GM12878 (cell line): ENCODE measurements at regions of chr16 and their contacts with region 1.

Region 1: DNA sequence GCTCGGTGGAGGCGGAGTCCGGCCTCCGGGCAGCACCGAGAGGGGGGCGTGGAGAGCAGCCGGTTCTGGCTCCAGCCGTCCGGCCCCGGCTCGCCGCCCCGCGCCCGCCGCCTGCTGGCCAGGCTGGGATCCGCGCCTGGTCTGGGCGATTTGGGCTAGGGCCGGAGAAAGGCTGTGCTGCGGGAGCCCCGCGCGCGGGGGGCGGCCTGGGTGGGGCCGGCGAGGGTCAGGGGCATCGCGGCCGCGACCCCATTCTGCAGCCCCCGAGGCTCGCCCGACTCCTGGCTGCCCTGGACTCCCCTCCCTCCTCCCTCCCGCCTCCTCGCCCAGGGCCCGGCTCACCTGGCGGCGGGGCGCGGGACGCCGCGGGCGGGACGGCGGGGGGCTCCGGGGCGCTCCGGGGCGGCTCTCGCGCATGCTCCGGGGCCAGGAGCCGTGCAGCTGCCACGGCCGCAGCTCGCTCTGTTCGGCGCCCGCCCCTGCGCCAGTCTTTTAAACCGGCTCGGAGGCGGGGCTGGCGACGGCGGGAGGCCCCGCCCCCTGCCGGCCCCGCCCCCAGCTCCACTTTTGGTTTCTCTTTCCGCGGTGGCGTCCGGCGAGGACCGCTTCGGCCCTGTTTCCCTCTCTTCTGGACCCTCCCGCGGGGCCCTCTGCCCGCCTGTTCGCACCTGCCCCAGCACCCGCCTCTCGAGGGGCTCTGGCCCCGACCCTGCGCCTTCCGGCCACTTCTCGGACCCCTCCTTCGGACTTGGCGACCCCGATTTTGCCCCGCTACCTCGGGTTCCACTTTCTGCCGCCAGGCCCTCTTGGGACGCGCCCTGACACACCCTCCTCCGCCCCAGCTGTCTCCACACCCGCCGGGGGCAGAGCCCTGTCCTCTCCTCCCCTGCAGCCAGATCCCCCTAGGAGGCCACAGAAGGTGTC is at the start of gene SOCS1:
- DNase-seq: no peak
- ATAC-seq: peak; percentile 60
- H3K4me3 ChIP-seq: peak within 1 kb of the TSS; percentile 91
- H3K27ac ChIP-seq: peak within 1 kb of the TSS; percentile 91
- H3K4me1 ChIP-seq: peaks cover 43% of the 10 kb centered on the region
- H3K27me3 ChIP-seq: no peaks in the 10 kb centered on the region
- CTCF ChIP-seq: peak; percentile 72 to 79 (median 76); a peak in 5 of 6 replicates
- EP300 ChIP-seq: 0 out of 4 replicates have a peak, but pooled peaks of 1 of the 2 experiments have one; percentile 7
- POLR2A ChIP-seq: peak; percentile 92
- RAD21 ChIP-seq: peak; percentile 68
- polyA plus RNA-seq, gene SOCS1: 0.42 to 1.2 TPM

Region 2: GRCh38 chr16:10949370-10949970 is 306.5 kb before region 1 on chr16:
- CTCF ChIA-PET with region 1: interaction called, 18 read pairs
- POLR2A ChIA-PET with region 1: interaction called, 4 read pairs
- RAD21 ChIA-PET with region 1: interaction called, 23 read pairs
- SMC1A ChIA-PET with region 1: interaction called, 4 read pairs
- in situ Hi-C with region 1: no loop called
- intact Hi-C with region 1: no loop called
- DNase-seq: peak; percentile 91
- ATAC-seq: peak; percentile 83
- H3K4me3 ChIP-seq: peak overlapping the region; percentile 28; the same call in 1 of the 2 replicates
- H3K27ac ChIP-seq: peak overlapping the region; percentile 62
- H3K4me1 ChIP-seq: peaks cover 27% of the 10 kb centered on the region
- H3K27me3 ChIP-seq: no peaks in the 10 kb centered on the region
- CTCF ChIP-seq: peak; percentile 34 to 55 (median 49); a peak in 2 of 6 replicates
- EP300 ChIP-seq: peak; percentile 9 to 33; a peak in 1 of 4 replicates
- POLR2A ChIP-seq: no peak
- RAD21 ChIP-seq: no peak

Region 3: GRCh38 chr16:11076259-11077018 is 179.6 kb before region 1 on chr16:
- CTCF ChIA-PET with region 1: interaction called, 14 read pairs
- POLR2A ChIA-PET with region 1: interaction called, 5 read pairs
- RAD21 ChIA-PET with region 1: interaction called, 19 read pairs
- SMC1A ChIA-PET with region 1: interaction called, 8 read pairs
- in situ Hi-C with region 1: no loop called
- intact Hi-C with region 1: loop called (anchors 5 kb)
- DNase-seq: peak; percentile 79
- ATAC-seq: peak; percentile 64
- H3K4me3 ChIP-seq: no peak overlapping the region
- H3K27ac ChIP-seq: peak overlapping the region; percentile 65
- H3K4me1 ChIP-seq: peaks cover 46% of the 10 kb centered on the region
- H3K27me3 ChIP-seq: no peaks in the 10 kb centered on the region
- CTCF ChIP-seq: no peak
- EP300 ChIP-seq: 0 out of 4 replicates have a peak, but pooled peaks of 1 of the 2 experiments have one; percentile 10
- POLR2A ChIP-seq: no peak
- RAD21 ChIP-seq: no peak

Region 4: GRCh38 chr16:11181899-11182279 is 74.1 kb before region 1 on chr16:
- CTCF ChIA-PET with region 1: interaction called, 15 read pairs
- POLR2A ChIA-PET with region 1: interaction called, 11 read pairs
- RAD21 ChIA-PET with region 1: interaction called, 39 read pairs
- SMC1A ChIA-PET with region 1: interaction called, 8 read pairs
- in situ Hi-C with region 1: no loop called
- intact Hi-C with region 1: loop called (anchors 1 kb)
- DNase-seq: peak; percentile 64
- ATAC-seq: peak; percentile 37
- H3K4me3 ChIP-seq: no peak overlapping the region
- H3K27ac ChIP-seq: peak overlapping the region; percentile 81
- H3K4me1 ChIP-seq: peaks cover 47% of the 10 kb centered on the region
- H3K27me3 ChIP-seq: no peaks in the 10 kb centered on the region
- CTCF ChIP-seq: no peak
- EP300 ChIP-seq: peak in 1 of 2 experiments; percentile 70; a peak in 1 of 4 replicates
- POLR2A ChIP-seq: peak; percentile 15; the same call in 1 of the 2 replicates
- RAD21 ChIP-seq: no peak

Region 5: GRCh38 chr16:11232852-11233726 is 22.9 kb before region 1 on chr16:
- CTCF ChIA-PET with region 1: interaction called, 7 read pairs
- POLR2A ChIA-PET with region 1: interaction called, 12 read pairs
- RAD21 ChIA-PET with region 1: interaction called, 13 read pairs
- SMC1A ChIA-PET with region 1: interaction called, 8 read pairs
- in situ Hi-C with region 1: no loop called
- intact Hi-C with region 1: no loop called
- DNase-seq: no peak
- ATAC-seq: peak; percentile 86
- H3K4me3 ChIP-seq: no peak overlapping the region
- H3K27ac ChIP-seq: peak overlapping the region; percentile 74
- H3K4me1 ChIP-seq: peaks cover 26% of the 10 kb centered on the region
- H3K27me3 ChIP-seq: no peaks in the 10 kb centered on the region
- CTCF ChIP-seq: no peak; a peak in 1 of 6 replicates
- EP300 ChIP-seq: peak in 1 of 2 experiments; percentile 52; a peak in 1 of 4 replicates
- POLR2A ChIP-seq: peak; percentile 79; the same call in 1 of the 2 replicates
- RAD21 ChIP-seq: peak; percentile 27

Region 6: GRCh38 chr16:11312718-11313492 is 56.9 kb after region 1 on chr16:
- CTCF ChIA-PET with region 1: interaction called, 33 read pairs
- POLR2A ChIA-PET with region 1: interaction called, 16 read pairs
- RAD21 ChIA-PET with region 1: interaction called, 104 read pairs
- SMC1A ChIA-PET with region 1: interaction called, 72 read pairs
- in situ Hi-C with region 1: no loop called
- intact Hi-C with region 1: loop called (anchors 2 kb)
- DNase-seq: no peak
- ATAC-seq: no peak
- H3K4me3 ChIP-seq: no peak overlapping the region
- H3K27ac ChIP-seq: no peak overlapping the region; the same call in 1 of the 2 replicates
- H3K4me1 ChIP-seq: peaks cover 57% of the 10 kb centered on the region
- H3K27me3 ChIP-seq: no peaks in the 10 kb centered on the region; a peak in 1 of 4 replicates
- CTCF ChIP-seq: no peak
- EP300 ChIP-seq: no peak
- POLR2A ChIP-seq: no peak
- RAD21 ChIP-seq: no peak

Region 7: DNA sequence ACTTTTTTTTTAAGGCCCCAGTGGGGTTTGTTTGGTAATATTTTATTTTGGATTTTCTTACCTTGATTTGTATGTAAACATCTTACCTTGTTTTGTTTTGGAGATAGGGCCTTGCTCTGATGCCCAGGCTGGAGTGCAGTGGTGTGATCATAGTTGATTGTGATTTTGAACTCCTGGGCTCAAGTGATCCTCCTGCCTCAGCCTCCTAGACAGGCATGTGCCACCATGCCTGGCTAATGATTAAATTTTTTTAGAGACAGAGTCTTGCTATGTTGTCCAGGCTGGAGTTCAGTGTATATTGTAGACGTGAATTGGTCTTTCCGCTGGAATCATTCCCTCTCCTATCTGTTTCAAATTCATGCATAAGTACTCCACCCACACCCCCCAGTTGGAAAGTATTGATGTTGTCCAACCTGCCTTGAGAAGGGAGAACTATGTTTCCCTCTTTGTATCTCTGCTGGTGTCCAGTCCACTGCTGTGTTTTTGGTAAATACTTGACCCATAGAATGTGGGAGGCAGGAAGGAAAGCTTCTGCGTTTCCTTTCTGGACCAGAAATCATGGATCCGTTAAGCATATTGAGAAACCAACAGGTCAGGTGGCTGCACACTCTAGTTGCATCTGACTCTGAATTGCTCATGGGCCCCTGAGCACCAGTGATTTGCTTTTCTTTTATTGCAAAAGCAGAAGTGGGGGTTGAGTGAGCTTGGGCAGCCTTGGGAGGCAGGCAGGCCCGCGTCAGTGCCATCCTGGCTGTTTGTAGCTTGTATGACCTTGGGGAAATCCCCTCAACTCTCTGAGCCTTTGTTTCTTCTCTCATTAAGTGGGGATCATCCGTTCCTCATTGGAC is 114.3 kb after region 1 on chr16:
- CTCF ChIA-PET with region 1: interaction called, 32 read pairs
- POLR2A ChIA-PET with region 1: interaction called, 13 read pairs
- RAD21 ChIA-PET with region 1: interaction called, 34 read pairs
- SMC1A ChIA-PET with region 1: interaction called, 7 read pairs
- in situ Hi-C with region 1: no loop called
- intact Hi-C with region 1: no loop called
- DNase-seq: peak; percentile 57
- ATAC-seq: peak; percentile 93
- H3K4me3 ChIP-seq: no peak overlapping the region
- H3K27ac ChIP-seq: no peak overlapping the region
- H3K4me1 ChIP-seq: peaks cover 15% of the 10 kb centered on the region
- H3K27me3 ChIP-seq: no peaks in the 10 kb centered on the region
- CTCF ChIP-seq: no peak
- EP300 ChIP-seq: no peak
- POLR2A ChIP-seq: no peak
- RAD21 ChIP-seq: no peak